ENCODE measurements at regions of chr3 and their contacts with region 1.

Region 1: DNA sequence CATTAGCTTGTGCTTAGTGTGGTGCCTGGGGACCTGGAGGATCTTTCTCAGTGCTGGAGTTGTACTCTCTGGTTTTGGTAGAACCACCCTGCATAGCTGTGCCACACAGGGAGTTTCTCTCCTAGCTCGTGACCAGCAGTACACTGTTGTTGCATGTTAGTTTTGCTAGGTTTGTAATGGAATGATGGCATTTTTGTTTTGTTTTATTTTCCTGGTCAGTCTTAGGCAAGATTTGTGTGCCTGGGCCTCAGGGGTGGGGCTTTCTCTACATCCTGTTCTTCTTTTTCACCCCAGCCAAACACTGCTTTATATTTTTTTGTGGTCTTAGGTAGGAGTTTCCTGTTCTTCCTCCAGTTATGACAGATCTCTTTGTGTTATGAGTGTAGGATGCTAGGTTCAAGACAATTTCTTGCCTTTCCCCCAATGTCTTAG is 534.5 kb upstream of the KCNMB2 start:
- DNase-seq: peak; percentile 59
- H3K4me3 Mint-ChIP-seq: no peak overlapping the region
- H3K27ac Mint-ChIP-seq: peak overlapping the region; percentile 80
- H3K4me1 Mint-ChIP-seq: peaks cover 63% of the 10 kb centered on the region
- H3K27me3 Mint-ChIP-seq: no peaks in the 10 kb centered on the region

Region 2: GRCh38 chr3:177419904-177420601 is 581.6 kb before region 1 on chr3:
- CTCF ChIA-PET with region 1: no interaction called
- intact Hi-C with region 1: loop called (anchors 1 kb)
- DNase-seq: peak; percentile 53
- H3K4me3 Mint-ChIP-seq: no peak overlapping the region
- H3K27ac Mint-ChIP-seq: peak overlapping the region; percentile 86
- H3K4me1 Mint-ChIP-seq: peaks cover 27% of the 10 kb centered on the region
- H3K27me3 Mint-ChIP-seq: peaks cover 2% of the 10 kb centered on the region

Region 3: GRCh38 chr3:177787279-177788041 is 214.2 kb before region 1 on chr3:
- CTCF ChIA-PET with region 1: no interaction called
- intact Hi-C with region 1: loop called (anchors 2 kb)
- DNase-seq: peak; percentile 36
- H3K4me3 Mint-ChIP-seq: no peak overlapping the region
- H3K27ac Mint-ChIP-seq: peak overlapping the region; percentile 65
- H3K4me1 Mint-ChIP-seq: peaks cover 29% of the 10 kb centered on the region
- H3K27me3 Mint-ChIP-seq: no peaks in the 10 kb centered on the region

Region 4: DNA sequence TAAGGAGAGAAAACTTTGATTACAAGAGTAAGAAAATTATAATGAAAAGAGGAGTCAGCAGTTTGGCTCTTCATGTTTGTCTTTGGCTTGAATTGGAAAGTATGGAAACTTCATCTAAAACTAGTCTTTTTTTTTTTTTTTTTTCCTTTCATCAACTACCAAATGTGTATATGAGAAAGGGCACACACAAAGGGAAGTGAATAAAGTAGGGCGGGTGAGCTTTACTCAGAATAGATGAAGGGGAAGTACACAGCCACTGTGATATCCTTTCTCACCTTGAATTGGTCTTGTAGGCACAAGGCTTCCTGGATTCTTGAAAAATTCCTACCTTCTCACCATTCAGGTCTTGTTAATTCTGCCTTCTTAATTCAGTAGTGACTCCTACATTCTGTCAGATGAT is 117.7 kb before region 1 on chr3:
- CTCF ChIA-PET with region 1: no interaction called
- intact Hi-C with region 1: loop called (anchors 2 kb)
- DNase-seq: no peak
- H3K4me3 Mint-ChIP-seq: no peak overlapping the region
- H3K27ac Mint-ChIP-seq: no peak overlapping the region
- H3K4me1 Mint-ChIP-seq: peaks cover 18% of the 10 kb centered on the region
- H3K27me3 Mint-ChIP-seq: no peaks in the 10 kb centered on the region

Region 5: DNA sequence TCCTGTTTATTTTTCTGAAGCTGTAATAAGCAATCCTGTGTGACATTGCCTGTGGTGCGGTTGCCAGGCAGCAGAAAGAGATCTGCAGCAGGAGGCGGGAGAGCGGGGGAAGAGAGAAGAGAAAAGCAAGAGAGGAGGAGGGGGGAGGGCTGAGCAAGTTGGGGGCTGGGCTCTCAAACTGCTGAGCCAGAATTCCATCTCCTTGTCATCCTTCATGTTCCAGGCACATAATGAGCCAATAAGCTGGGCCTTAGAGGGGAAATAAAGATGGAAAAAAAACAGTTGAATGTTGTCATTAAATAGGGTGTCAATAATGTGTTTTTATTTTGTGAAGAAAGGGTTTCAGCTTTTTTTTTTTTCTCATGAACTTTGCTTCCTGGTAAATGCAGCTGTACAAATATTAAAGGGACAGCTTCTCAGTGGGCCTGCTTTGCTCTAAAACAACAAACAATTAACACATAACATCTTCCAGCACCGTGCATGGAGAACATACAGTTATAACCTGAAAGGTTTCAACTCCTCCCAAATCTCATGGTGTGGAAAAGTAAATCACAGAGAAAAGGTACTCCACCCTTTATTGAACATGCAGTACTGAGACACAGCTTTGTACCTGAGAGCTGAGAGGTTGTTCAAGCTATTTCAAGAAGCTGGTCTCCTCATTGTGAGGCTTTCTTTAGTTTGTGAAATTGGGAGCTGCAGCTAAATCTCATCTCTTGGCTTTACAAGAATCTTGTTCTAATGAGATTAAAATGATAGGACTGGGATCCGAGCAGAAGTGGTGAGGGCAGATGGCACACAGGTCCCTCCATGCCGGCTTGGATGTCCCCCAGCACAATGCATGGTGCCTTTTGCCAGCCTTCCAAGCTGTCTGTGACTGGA is 83.5 kb after region 1 on chr3:
- CTCF ChIA-PET with region 1: no interaction called
- intact Hi-C with region 1: loop called (anchors 2 kb)
- DNase-seq: peak; percentile 71
- H3K4me3 Mint-ChIP-seq: no peak overlapping the region
- H3K27ac Mint-ChIP-seq: no peak overlapping the region
- H3K4me1 Mint-ChIP-seq: peaks cover 37% of the 10 kb centered on the region
- H3K27me3 Mint-ChIP-seq: no peaks in the 10 kb centered on the region

Region 6: DNA sequence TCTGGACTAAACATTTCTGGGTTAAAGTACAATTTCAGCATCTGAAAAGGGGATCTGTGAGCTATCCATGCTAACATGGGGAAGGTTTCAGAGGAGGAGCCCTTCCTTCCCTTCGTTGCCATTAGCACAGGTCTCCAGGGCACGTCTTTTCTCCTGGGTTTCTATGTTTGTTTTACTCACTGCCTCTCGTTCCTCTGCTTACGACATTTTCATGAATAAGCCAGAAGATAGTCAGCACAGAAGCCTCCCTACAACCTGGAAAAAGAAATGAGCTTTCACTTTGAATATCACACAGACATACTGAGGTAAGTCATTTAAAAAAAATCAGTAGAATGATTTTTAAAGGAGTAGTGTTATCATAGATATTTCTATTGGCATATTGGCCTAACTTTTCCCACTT is 417.4 kb after region 1 on chr3:
- CTCF ChIA-PET with region 1: no interaction called
- intact Hi-C with region 1: no loop called
- DNase-seq: no peak
- H3K4me3 Mint-ChIP-seq: no peak overlapping the region
- H3K27ac Mint-ChIP-seq: no peak overlapping the region
- H3K4me1 Mint-ChIP-seq: no peaks in the 10 kb centered on the region
- H3K27me3 Mint-ChIP-seq: peaks cover 2% of the 10 kb centered on the region